MCF 10A (cell line): ENCODE measurements at regions of chr16 and their contacts with region 1.

Region 1: GRCh38 chr16:69726296-69727060 is at the start of gene NQO1:
- DNase-seq: peak; percentile 99
- H3K4me3 Mint-ChIP-seq: peak within 1 kb of the TSS; percentile 90
- H3K27ac Mint-ChIP-seq: peak within 1 kb of the TSS; percentile 93
- H3K4me1 Mint-ChIP-seq: peaks cover 17% of the 10 kb centered on the region
- H3K27me3 Mint-ChIP-seq: no peaks in the 10 kb centered on the region
- CTCF ChIP-seq: no peak
- total RNA-seq, gene NQO1: 82.7 and 140 TPM in 2 replicates

Region 2: DNA sequence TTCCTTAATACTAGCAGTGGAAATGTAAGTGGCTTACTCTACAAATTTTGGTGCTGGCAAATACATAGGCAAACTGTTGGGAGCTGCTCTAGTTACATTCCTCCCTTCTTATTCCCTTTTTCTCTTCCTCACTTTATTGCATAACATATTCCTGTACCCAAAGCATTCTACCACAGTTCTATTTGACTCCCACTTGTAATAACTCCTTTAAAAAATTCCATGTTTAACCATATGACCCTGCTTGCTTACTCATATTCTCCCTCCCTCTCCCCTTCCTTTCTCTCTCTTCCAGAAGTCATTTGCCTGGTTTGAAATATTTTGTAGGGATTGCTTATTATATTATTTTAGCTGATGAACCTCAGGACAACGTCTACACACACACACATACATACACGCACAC is 22.8 kb before region 1 on chr16:
- CTCF ChIA-PET with region 1: interaction called, 10 read pairs
- POLR2A ChIA-PET with region 1: interaction called, 83 read pairs
- intact Hi-C with region 1: no loop called
- DNase-seq: no peak
- H3K4me3 Mint-ChIP-seq: no peak overlapping the region
- H3K27ac Mint-ChIP-seq: no peak overlapping the region
- H3K4me1 Mint-ChIP-seq: no peaks in the 10 kb centered on the region
- H3K27me3 Mint-ChIP-seq: no peaks in the 10 kb centered on the region
- CTCF ChIP-seq: no peak

Region 3: GRCh38 chr16:69709456-69710084 is 16.9 kb before region 1 on chr16:
- CTCF ChIA-PET with region 1: interaction called, 16 read pairs
- POLR2A ChIA-PET with region 1: interaction called, 83 read pairs
- intact Hi-C with region 1: loop called (anchors 1 kb)
- DNase-seq: peak; percentile 81
- H3K4me3 Mint-ChIP-seq: no peak overlapping the region
- H3K27ac Mint-ChIP-seq: no peak overlapping the region
- H3K4me1 Mint-ChIP-seq: peaks cover 16% of the 10 kb centered on the region
- H3K27me3 Mint-ChIP-seq: no peaks in the 10 kb centered on the region
- CTCF ChIP-seq: peak; percentile 65

Region 4: GRCh38 chr16:69741919-69742904 is 15.7 kb after region 1 on chr16:
- CTCF ChIA-PET with region 1: interaction called, 5 read pairs
- POLR2A ChIA-PET with region 1: interaction called, 63 read pairs
- intact Hi-C with region 1: no loop called
- DNase-seq: peak; percentile 91
- H3K4me3 Mint-ChIP-seq: no peak overlapping the region
- H3K27ac Mint-ChIP-seq: no peak overlapping the region
- H3K4me1 Mint-ChIP-seq: peaks cover 11% of the 10 kb centered on the region
- H3K27me3 Mint-ChIP-seq: no peaks in the 10 kb centered on the region
- CTCF ChIP-seq: no peak

Region 5: DNA sequence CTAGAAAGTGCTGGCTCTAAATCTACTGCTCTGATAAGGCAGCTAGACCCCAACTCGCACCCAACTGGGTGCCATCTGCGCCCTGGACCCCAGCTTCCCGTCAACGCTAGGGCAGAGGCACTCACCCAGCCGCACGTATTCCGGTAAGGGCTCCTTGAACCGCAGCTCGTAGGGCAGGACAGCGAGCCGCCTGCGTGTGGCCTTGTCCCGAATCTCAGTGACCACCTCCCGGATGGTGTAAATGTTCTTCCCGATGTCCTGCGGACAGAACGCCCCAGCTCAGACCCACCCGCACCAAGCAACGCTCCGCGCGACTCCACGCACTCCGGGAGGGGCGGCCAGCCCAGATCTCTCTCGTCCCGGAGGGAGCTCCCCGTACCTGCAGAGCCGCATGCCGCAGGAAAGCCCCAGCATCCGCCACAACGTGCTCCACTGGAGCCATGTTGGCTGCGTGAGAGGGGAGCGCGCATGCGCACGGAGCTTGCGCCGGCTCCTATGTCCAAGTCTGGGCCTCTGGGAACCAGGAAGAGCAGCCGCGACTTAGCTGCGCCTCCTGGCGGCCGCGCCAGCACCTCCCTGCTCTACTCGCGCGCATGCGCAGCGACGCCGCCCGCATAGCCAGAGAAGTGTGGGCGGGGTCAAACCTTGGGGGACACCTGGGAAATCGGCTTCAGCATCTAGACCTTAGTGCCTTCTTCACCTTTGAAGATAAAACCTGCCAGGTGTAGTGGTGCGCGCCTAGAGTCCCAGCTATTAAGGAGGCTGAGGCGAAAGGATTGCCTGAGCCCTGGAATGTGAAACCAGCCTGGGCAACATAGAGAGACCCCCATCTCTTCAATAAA is 28.2 kb after region 1 on chr16 and contains the start of gene NOB1:
- CTCF ChIA-PET with region 1: interaction called, 87 read pairs
- POLR2A ChIA-PET with region 1: interaction called, 138 read pairs
- intact Hi-C with region 1: loop called (anchors 1 kb)
- DNase-seq: peak; percentile 94
- H3K4me3 Mint-ChIP-seq: peak within 1 kb of the TSS; percentile 98
- H3K27ac Mint-ChIP-seq: peak within 1 kb of the TSS; percentile 99
- H3K4me1 Mint-ChIP-seq: peaks cover 3% of the 10 kb centered on the region
- H3K27me3 Mint-ChIP-seq: no peaks in the 10 kb centered on the region
- CTCF ChIP-seq: peak; percentile 93
- total RNA-seq, gene NOB1: 73.3 and 110 TPM in 2 replicates

Region 6: GRCh38 chr16:69761983-69762813 is 35.7 kb after region 1 on chr16 and contains the start of gene WWP2:
- CTCF ChIA-PET with region 1: no interaction called
- POLR2A ChIA-PET with region 1: interaction called, 138 read pairs
- intact Hi-C with region 1: no loop called
- DNase-seq: peak; percentile 80
- H3K4me3 Mint-ChIP-seq: peak within 1 kb of the TSS; percentile 75
- H3K27ac Mint-ChIP-seq: peak within 1 kb of the TSS; percentile 93
- H3K4me1 Mint-ChIP-seq: peaks cover 5% of the 10 kb centered on the region
- H3K27me3 Mint-ChIP-seq: no peaks in the 10 kb centered on the region
- CTCF ChIP-seq: no peak
- total RNA-seq, gene WWP2: 29.3 and 30.4 TPM in 2 replicates